GM10248 (cell line): ENCODE measurements at regions of chr16 and their contacts with region 1.

Region 1: GRCh38 chr16:12392585-12393091 is 411.0 kb downstream of the CPPED1 start:
- DNase-seq: no peak
- CTCF ChIP-seq: no peak

Region 2: GRCh38 chr16:12403746-12404658 is 11.4 kb after region 1 on chr16:
- CTCF ChIA-PET with region 1: interaction called, 15 read pairs
- POLR2A ChIA-PET with region 1: no interaction called
- DNase-seq: no peak
- CTCF ChIP-seq: no peak